Activated CD4-positive, alpha-beta T cell treated with anti-CD3 and anti-CD28 coated beads for 36 hours (primary cell): ENCODE measurements at regions of chr1 and their contacts with region 1.

Region 1: DNA sequence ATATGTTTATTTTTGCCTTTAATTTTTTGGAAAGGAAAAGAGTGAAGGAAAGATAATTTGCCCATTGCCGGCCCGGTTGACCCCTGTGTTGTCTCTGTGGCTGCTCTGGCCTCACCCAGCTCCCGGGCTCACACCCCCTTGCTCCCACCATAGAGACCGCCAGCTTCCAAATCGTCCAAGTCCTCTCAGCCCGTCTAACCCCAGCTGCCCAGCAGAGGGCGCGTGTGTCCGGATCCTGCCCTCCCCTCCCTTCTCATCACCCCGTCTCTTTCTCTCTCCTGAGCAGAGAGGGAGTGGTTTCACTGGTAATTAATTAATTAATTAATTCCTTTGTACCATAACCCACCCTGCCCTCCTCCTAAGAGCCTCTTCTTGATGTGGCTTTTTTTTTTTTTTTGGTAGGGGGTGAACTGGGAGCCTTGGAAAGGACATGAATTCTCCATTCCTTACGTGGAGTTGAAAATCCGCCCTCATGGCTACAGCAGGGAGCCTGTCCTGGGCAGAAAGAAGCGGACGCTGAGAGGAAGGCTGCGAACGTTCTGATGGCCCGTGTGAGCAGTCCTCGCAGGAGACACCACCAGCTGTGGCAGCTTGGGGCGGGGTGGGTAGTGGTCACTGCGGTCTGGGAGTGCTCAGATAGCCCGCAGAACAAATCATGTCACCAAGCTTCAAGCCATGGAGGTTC is 45.9 kb downstream of the KIAA0040 start:
- DNase-seq: peak; percentile 84
- ATAC-seq: peak; percentile 89
- H3K4me3 Mint-ChIP-seq: no peak overlapping the region
- H3K27ac Mint-ChIP-seq: no peak overlapping the region
- H3K4me1 Mint-ChIP-seq: peaks cover 6% of the 10 kb centered on the region
- H3K27me3 Mint-ChIP-seq: peaks cover 15% of the 10 kb centered on the region

Region 2: GRCh38 chr1:175005085-175005783 is 141.4 kb before region 1 on chr1:
- CTCF ChIA-PET with region 1: no interaction called
- POLR2A ChIA-PET with region 1: no interaction called
- intact Hi-C with region 1: no loop called
- DNase-seq: peak; percentile 44
- ATAC-seq: peak; percentile 49
- H3K4me3 Mint-ChIP-seq: peak overlapping the region; percentile 4
- H3K27ac Mint-ChIP-seq: peak overlapping the region; percentile 88
- H3K4me1 Mint-ChIP-seq: peaks cover 57% of the 10 kb centered on the region
- H3K27me3 Mint-ChIP-seq: no peaks in the 10 kb centered on the region

Region 3: GRCh38 chr1:175033953-175034352 is 112.7 kb before region 1 on chr1:
- CTCF ChIA-PET with region 1: interaction called, 14 read pairs
- POLR2A ChIA-PET with region 1: no interaction called
- intact Hi-C with region 1: loop called (anchors 1 to 5 kb)
- DNase-seq: no peak
- ATAC-seq: no peak
- H3K4me3 Mint-ChIP-seq: no peak overlapping the region
- H3K27ac Mint-ChIP-seq: no peak overlapping the region
- H3K4me1 Mint-ChIP-seq: peaks cover 9% of the 10 kb centered on the region
- H3K27me3 Mint-ChIP-seq: no peaks in the 10 kb centered on the region

Region 4: DNA sequence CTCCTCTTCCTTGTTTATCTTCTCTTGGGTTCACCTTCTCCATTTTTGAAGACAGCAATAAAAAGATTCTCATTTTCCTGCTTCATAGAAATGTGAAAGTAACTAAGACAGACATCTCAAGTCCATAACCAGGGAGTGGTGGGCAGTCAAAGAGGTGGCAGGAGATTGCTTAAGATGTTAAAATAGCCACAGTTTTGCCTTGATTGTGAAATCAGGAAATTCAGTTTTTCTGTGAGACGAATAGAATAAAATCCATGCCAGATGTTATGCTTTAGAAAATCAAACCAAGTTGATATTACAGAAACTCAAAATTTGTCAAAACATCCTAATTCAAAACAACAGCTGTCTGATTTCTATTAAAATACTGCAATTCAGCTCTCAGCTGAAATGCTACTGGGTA is 21.8 kb before region 1 on chr1:
- CTCF ChIA-PET with region 1: interaction called, 18 read pairs
- POLR2A ChIA-PET with region 1: no interaction called
- intact Hi-C with region 1: no loop called
- DNase-seq: no peak
- ATAC-seq: no peak
- H3K4me3 Mint-ChIP-seq: no peak overlapping the region
- H3K27ac Mint-ChIP-seq: no peak overlapping the region
- H3K4me1 Mint-ChIP-seq: no peaks in the 10 kb centered on the region
- H3K27me3 Mint-ChIP-seq: no peaks in the 10 kb centered on the region

Region 5: GRCh38 chr1:175338387-175339135 is 191.9 kb after region 1 on chr1:
- CTCF ChIA-PET with region 1: interaction called, 51 read pairs
- POLR2A ChIA-PET with region 1: no interaction called
- intact Hi-C with region 1: loop called in 1 of 2 experiments (anchors 5 kb)
- DNase-seq: peak; percentile 82
- ATAC-seq: peak; percentile 97
- H3K4me3 Mint-ChIP-seq: no peak overlapping the region
- H3K27ac Mint-ChIP-seq: no peak overlapping the region
- H3K4me1 Mint-ChIP-seq: peaks cover 3% of the 10 kb centered on the region
- H3K27me3 Mint-ChIP-seq: peaks cover 15% of the 10 kb centered on the region

Region 6: DNA sequence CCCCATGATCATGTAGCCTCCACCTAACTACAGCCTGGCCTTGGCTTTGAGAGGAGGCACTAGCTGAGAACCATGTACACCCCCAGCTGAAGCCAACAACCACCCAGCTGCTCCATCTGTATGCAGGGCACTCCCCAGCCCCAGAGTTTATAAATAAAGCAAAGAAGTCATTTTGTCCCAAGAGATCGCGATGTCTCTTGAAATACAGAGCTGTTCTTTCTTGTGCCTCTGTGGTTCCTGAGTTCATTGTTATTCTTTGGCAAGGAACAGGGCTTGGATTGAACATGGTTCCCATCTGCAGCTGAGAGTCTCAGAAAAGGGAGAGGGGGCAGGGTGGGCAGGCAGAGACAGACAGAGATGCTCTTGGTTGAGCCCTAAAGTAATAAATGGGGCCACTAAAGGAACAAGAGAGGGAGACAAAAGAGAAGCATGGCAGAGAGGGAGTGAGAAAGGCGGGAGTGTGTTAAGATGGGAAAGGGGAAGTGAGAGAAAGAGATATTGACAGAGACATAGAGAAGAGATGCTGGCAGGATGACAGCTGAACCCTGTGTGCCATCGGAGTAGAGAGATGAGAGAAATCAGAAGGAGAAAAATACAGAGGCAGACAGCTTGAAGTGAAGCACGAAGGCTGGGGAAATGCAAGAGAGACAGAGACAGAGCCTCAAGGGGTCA is 533.4 kb after region 1 on chr1:
- CTCF ChIA-PET with region 1: no interaction called
- POLR2A ChIA-PET with region 1: no interaction called
- intact Hi-C with region 1: no loop called
- DNase-seq: no peak
- ATAC-seq: no peak
- H3K4me3 Mint-ChIP-seq: no peak overlapping the region
- H3K27ac Mint-ChIP-seq: no peak overlapping the region
- H3K4me1 Mint-ChIP-seq: no peaks in the 10 kb centered on the region
- H3K27me3 Mint-ChIP-seq: peaks cover 2% of the 10 kb centered on the region